ENCODE measurements at regions of chr1 and their contacts with region 1.

Region 1: DNA sequence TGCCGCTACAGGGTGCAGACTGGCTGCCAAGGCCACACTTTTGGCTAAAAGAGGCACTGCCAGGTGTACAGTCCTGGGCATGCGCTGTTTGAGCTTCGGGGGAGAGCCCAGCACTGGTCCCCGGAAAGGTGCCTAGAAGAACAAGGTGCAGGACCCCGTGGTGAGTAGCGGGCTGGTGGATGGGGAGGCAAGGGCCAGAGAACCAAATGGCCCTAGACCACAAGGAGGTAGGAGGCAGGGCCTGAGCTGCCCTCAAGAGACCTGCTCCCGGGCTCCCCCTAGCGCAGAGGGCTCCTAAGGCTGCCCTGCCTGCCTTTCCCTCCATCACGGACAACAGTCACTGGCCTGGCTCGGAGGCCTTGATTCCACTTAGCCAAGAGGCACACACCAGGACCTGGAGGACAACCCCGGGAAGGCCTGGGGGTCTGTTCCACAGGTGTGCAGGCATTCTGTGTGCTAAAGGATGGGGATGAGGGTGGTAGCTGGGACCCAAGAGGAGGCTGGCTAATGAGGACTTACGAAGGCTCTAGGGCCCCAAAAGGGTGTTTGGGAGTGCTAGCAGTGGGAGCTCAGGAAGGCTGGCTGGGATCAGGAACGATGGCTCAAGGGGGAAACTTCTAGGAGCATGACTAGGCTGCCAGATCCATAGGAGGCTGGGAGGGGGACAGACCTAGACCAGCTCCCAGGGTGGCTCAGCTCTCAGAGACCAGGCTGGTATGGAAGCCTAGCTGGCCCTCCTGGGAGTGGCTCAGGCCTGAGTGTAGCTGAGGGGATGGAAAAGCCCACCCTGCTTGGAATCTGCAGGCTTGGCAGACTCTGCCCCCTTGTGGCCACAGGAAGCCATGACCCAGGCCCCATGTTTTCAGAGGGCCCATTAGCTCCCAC is 742 bp downstream of the ARTN start:
- H3K4me3 Mint-ChIP-seq: no peak overlapping the region
- H3K27ac Mint-ChIP-seq: no peak overlapping the region
- H3K4me1 Mint-ChIP-seq: peaks cover 32% of the 10 kb centered on the region
- H3K27me3 Mint-ChIP-seq: peaks cover 27% of the 10 kb centered on the region

Region 2: DNA sequence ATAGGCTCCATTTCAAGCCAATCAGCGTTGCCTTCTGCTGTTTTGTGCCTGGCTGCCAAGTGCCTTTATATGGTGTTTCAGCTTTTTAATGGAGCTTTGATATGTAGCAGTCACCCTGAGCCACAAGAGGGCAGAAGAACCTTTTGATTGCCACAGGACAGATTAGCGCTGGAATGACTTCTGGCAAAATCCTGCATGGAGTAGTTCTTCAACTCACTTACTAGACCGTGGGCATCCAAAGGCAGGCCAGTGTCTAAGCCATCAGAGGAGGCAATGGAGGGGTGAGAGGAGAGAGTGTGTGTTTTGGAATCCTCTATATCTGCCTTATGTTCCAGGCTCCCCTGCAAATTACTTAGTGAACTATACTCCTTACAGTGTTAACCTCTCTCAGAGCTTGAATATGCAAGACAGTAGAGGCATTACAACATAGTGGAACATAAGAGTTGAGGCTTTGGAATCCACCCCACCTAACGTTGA is 170.8 kb before region 1 on chr1:
- intact Hi-C with region 1: loop called (anchors 1 kb)
- H3K4me3 Mint-ChIP-seq: no peak overlapping the region
- H3K27ac Mint-ChIP-seq: no peak overlapping the region
- H3K4me1 Mint-ChIP-seq: peaks cover 12% of the 10 kb centered on the region
- H3K27me3 Mint-ChIP-seq: no peaks in the 10 kb centered on the region

Region 3: GRCh38 chr1:43958351-43959255 is 24.3 kb after region 1 on chr1:
- intact Hi-C with region 1: no loop called
- H3K4me3 Mint-ChIP-seq: no peak overlapping the region
- H3K27ac Mint-ChIP-seq: no peak overlapping the region
- H3K4me1 Mint-ChIP-seq: peaks cover 6% of the 10 kb centered on the region
- H3K27me3 Mint-ChIP-seq: no peaks in the 10 kb centered on the region